ENCODE measurements at regions of chr11 and their contacts with region 1.

Region 1: GRCh38 chr11:78574386-78575381 is at the start of gene NARS2:
- DNase-seq: peak; percentile 98
- H3K4me3 Mint-ChIP-seq: peak within 1 kb of the TSS; percentile 89
- H3K27ac Mint-ChIP-seq: peak within 1 kb of the TSS; percentile 90
- H3K4me1 Mint-ChIP-seq: peaks cover 5% of the 10 kb centered on the region
- H3K27me3 Mint-ChIP-seq: no peaks in the 10 kb centered on the region
- CTCF ChIP-seq: no peak
- total RNA-seq, gene NARS2: 15.1 and 24.6 TPM in 2 replicates

Region 2: DNA sequence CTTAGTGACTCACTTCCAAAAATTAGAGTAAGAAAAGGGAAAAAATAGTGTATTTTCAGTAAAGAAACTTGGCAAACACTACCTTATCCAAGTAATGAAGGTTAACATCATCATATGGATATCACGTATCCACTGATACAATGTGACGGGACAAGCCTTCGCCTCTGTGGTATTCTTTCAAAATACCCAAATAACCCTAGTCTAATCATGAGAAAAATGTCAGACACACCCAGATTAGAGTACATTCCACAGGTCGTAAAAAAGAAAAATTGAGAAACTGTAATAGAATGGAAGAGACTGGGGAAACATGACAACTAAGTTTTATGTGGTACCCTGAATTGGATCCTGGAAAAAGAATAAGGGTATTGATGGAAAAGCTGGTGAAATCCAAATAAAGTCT is 49.0 kb before region 1 on chr11:
- CTCF ChIA-PET with region 1: no interaction called
- POLR2A ChIA-PET with region 1: no interaction called
- intact Hi-C with region 1: no loop called
- DNase-seq: peak; percentile 17
- H3K4me3 Mint-ChIP-seq: no peak overlapping the region
- H3K27ac Mint-ChIP-seq: peak overlapping the region; percentile 8
- H3K4me1 Mint-ChIP-seq: peaks cover 7% of the 10 kb centered on the region
- H3K27me3 Mint-ChIP-seq: no peaks in the 10 kb centered on the region
- CTCF ChIP-seq: no peak

Region 3: DNA sequence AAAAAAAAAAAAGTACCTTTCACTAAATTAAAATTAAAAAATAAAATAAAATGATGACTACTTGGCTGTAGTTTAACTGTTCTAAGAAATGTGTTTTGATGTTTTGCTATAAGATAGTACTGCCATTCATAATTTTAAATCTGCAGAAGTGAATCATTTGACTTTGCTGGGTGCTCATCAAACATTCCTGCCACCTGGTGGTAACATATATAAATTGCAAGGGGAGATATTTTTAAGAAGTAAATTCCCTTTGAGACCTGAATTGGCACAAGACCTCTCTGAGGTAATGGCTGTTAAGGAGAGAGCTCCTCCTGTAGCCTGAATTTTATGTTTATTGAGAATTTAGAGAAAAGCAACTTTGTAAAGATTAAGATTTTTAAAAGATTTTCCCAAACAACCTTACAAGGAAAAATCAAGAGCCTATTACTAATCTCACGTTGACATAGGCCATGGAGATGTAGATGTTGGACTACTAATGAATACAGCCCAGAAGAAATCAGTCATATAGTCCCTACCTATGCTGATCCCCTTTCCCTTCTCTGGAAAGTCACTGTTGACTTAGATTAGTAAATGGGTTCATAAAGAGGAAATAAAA is 11.9 kb after region 1 on chr11:
- CTCF ChIA-PET with region 1: interaction called, 13 read pairs
- POLR2A ChIA-PET with region 1: interaction called, 4 read pairs
- intact Hi-C with region 1: no loop called
- DNase-seq: peak; percentile 41
- H3K4me3 Mint-ChIP-seq: no peak overlapping the region
- H3K27ac Mint-ChIP-seq: no peak overlapping the region
- H3K4me1 Mint-ChIP-seq: no peaks in the 10 kb centered on the region
- H3K27me3 Mint-ChIP-seq: peaks cover 15% of the 10 kb centered on the region
- CTCF ChIP-seq: peak; percentile 53

Measured in MCF 10A (cell line).